ENCODE measurements at regions of chr14 and their contacts with region 1.

Region 1: GRCh38 chr14:78758332-78758731 is 588.2 kb downstream of the NRXN3 start:
- DNase-seq: no peak
- H3K4me3 ChIP-seq: no peak overlapping the region
- H3K27ac ChIP-seq: no peak overlapping the region
- H3K4me1 ChIP-seq: no peaks in the 10 kb centered on the region
- H3K27me3 ChIP-seq: no peaks in the 10 kb centered on the region
- CTCF ChIP-seq: no peak
- POLR2A ChIP-seq: no peak

Region 2: DNA sequence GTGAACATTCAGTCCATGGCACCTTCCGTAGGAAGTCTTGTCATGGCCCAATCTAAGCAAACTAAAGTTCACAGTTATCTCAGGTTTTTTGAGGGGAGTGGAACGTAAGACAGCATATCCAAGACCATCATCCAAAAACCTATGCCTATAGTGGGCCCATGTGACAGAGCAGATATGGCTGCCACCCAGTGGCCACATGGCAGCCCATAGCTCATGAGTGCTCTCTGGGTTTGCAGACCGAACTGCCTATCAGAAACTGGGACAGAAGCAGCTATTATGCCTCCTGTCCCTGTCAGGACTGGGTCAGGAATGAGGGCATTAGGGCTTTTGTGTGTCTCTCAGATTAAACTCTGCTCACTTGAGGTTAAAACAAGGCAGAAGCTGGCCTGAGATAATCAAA is 84.5 kb before region 1 on chr14:
- intact Hi-C with region 1: loop called (anchors 2 kb)
- DNase-seq: no peak
- H3K4me3 ChIP-seq: no peak overlapping the region
- H3K27ac ChIP-seq: no peak overlapping the region
- H3K4me1 ChIP-seq: no peaks in the 10 kb centered on the region
- H3K27me3 ChIP-seq: no peaks in the 10 kb centered on the region
- CTCF ChIP-seq: no peak
- POLR2A ChIP-seq: no peak

Region 3: DNA sequence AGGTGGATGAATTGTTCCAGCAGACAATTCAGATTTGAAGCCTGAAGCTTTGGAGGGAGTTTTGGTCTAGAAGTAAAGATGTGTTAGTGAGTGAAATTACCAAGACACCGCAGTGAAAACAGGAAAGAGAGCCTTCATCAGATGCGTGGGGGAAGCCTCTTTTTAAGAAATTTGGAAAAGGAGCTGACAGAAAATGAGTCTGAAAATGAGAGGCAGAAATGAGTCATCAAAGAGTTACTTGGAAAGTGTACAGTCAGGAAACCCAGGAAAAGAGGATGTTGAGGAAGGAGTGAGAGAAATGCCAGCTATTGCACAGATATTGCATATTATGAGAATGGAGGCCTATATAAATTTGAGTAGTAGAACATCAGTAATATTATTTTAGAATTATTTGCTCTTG is 67.5 kb before region 1 on chr14:
- intact Hi-C with region 1: no loop called
- DNase-seq: no peak
- H3K4me3 ChIP-seq: no peak overlapping the region
- H3K27ac ChIP-seq: no peak overlapping the region
- H3K4me1 ChIP-seq: no peaks in the 10 kb centered on the region
- H3K27me3 ChIP-seq: no peaks in the 10 kb centered on the region
- CTCF ChIP-seq: no peak
- POLR2A ChIP-seq: no peak

Region 4: GRCh38 chr14:78737116-78737515 is 21.2 kb before region 1 on chr14:
- intact Hi-C with region 1: loop called (anchors 2 kb)
- DNase-seq: no peak
- H3K4me3 ChIP-seq: no peak overlapping the region
- H3K27ac ChIP-seq: no peak overlapping the region
- H3K4me1 ChIP-seq: no peaks in the 10 kb centered on the region
- H3K27me3 ChIP-seq: no peaks in the 10 kb centered on the region
- CTCF ChIP-seq: no peak
- POLR2A ChIP-seq: no peak

Region 5: GRCh38 chr14:80117876-80118275 is 1359.5 kb after region 1 on chr14:
- intact Hi-C with region 1: no loop called
- DNase-seq: no peak
- H3K4me3 ChIP-seq: no peak overlapping the region
- H3K27ac ChIP-seq: no peak overlapping the region
- H3K4me1 ChIP-seq: no peaks in the 10 kb centered on the region
- H3K27me3 ChIP-seq: no peaks in the 10 kb centered on the region
- CTCF ChIP-seq: no peak
- POLR2A ChIP-seq: no peak

Measured in breast epithelium (tissue), 4 donors.